ENCODE measurements at regions of chr17 and their contacts with region 1.

Region 1: DNA sequence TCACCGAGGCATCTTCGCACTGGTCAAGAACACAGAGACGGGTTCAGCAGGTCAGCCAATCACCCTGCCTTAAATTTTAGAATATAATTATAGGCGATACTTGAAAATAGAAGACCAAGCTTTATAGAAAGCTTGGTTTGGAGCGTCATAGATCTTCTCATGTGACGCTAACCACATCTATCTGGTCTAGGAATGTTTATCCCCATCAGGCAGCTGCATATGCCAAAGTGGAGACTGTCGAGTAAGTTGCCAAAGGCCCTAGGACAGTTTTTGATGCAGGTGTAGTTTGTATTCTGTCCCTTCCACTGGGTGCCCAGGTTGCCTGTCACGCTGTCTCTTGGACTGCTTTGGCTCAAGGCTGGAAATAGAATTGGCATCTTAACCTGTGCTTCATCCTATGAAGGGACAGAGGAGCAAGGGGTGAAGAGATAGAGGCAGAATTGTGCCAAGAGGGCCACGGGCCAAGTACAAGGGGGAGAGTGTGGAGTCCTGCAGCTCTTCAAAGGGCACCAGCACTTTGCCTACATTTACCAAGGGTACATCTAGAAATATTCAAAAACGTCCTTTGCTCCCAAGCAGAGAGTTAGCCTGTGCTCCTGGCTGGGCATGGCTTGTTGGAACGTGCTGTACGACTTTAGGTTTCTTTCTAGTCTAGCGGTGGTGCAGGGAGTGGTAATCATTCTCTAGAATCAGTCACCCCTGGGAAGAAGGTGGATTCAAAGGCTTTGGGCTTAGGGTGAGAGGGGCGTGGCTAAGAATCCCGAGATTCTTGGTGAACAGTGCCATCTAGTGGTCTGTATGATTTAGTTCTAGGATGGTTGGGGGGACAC is 5.3 kb upstream of the WIPI1 start:
- DNase-seq: peak; percentile 94

Region 2: GRCh38 chr17:68260051-68260762 is 202.4 kb before region 1 on chr17:
- in situ Hi-C with region 1: loop called (anchors 10 kb)
- DNase-seq: peak; percentile 69

Region 3: DNA sequence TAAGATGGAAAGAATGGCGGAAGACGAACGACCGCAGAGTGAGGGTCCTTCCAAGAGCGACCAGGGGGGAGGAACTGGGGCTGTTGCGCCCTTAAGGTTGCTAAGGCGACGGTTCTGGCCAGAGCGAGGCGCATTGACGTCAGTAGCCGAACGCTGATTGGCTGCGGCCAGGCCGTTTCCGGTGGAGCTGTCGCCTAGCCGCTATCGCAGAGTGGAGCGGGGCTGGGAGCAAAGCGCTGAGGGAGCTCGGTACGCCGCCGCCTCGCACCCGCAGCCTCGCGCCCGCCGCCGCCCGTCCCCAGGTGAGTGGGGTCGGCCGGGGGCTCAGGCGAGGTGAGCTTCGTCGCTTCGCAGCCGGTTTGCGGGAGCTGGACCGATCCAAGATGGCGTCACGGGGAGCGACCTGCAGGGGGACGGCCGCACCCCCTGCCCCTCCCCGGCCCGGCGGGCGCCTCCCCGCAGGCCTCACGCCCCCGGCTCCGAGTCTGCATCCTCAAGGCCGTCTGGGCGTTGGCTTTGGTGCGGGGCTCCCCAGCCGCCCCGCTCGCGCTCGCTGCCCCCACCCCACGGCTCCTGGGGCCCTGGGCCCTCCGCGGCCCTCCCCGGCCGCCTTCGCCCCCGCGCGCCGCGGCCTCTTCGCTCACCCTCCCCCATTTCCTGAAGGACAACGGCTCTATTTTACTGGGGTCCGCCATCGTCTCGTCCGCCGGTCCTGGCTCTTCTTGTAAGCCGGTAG is 49.8 kb after region 1 on chr17 and contains the start of gene PRKAR1A:
- in situ Hi-C with region 1: no loop called
- DNase-seq: peak; percentile 97
- total RNA-seq, gene PRKAR1A: 130 and 156 TPM in 2 replicates

Region 4: GRCh38 chr17:68533887-68534694 is 71.5 kb after region 1 on chr17:
- in situ Hi-C with region 1: no loop called
- DNase-seq: no peak

Measured in G401 (cell line).